Transverse colon (tissue), 4 donors: ENCODE measurements at regions of chr11 and their contacts with region 1.

Region 1: GRCh38 chr11:93543292-93543977 is at the start of gene SMCO4:
- DNase-seq: peak; percentile 89
- H3K4me3 ChIP-seq: peak within 1 kb of the TSS; percentile 52 to 96 (median 66)
- H3K27ac ChIP-seq: peak within 1 kb of the TSS; percentile 77 to 93 (median 78)
- H3K4me1 ChIP-seq: peaks cover 0 to 23% (median 11%) of the 10 kb centered on the region in 4 donors
- H3K27me3 ChIP-seq: no peaks in the 10 kb centered on the region
- CTCF ChIP-seq: peak; percentile 63 to 78 (median 66)
- EP300 ChIP-seq: no peak
- POLR2A ChIP-seq: peak; percentile 28
- total RNA-seq, gene SMCO4: 33.3 to 80.4 (median 37.0) TPM in 3 of 4 donors, not detected in the other

Region 2: GRCh38 chr11:93234602-93235207 is 308.7 kb before region 1 on chr11:
- in situ Hi-C with region 1: loop called in 3 of 4 experiments (anchors 10 kb)
- intact Hi-C with region 1: loop called (anchors 10 kb)
- DNase-seq: peak; percentile 82
- H3K4me3 ChIP-seq: no peak overlapping the region
- H3K27ac ChIP-seq: no peak overlapping the region
- H3K4me1 ChIP-seq: peaks cover 0 to 15% (median 2%) of the 10 kb centered on the region in 4 donors
- H3K27me3 ChIP-seq: no peaks in the 10 kb centered on the region
- CTCF ChIP-seq: peak; percentile 84 to 88 (median 87)
- EP300 ChIP-seq: no peak
- POLR2A ChIP-seq: no peak

Region 3: GRCh38 chr11:93248602-93249001 is 294.8 kb before region 1 on chr11:
- in situ Hi-C with region 1: loop called in 1 of 4 experiments (anchors 10 kb)
- intact Hi-C with region 1: no loop called
- DNase-seq: no peak
- H3K4me3 ChIP-seq: no peak overlapping the region
- H3K27ac ChIP-seq: no peak overlapping the region
- H3K4me1 ChIP-seq: no peaks in the 10 kb centered on the region
- H3K27me3 ChIP-seq: no peaks in the 10 kb centered on the region
- CTCF ChIP-seq: peak in 3 of 5 experiments; percentile 8 to 19 (median 14)
- EP300 ChIP-seq: no peak
- POLR2A ChIP-seq: no peak